ENCODE measurements at regions of chr10 and their contacts with region 1.

Region 1: DNA sequence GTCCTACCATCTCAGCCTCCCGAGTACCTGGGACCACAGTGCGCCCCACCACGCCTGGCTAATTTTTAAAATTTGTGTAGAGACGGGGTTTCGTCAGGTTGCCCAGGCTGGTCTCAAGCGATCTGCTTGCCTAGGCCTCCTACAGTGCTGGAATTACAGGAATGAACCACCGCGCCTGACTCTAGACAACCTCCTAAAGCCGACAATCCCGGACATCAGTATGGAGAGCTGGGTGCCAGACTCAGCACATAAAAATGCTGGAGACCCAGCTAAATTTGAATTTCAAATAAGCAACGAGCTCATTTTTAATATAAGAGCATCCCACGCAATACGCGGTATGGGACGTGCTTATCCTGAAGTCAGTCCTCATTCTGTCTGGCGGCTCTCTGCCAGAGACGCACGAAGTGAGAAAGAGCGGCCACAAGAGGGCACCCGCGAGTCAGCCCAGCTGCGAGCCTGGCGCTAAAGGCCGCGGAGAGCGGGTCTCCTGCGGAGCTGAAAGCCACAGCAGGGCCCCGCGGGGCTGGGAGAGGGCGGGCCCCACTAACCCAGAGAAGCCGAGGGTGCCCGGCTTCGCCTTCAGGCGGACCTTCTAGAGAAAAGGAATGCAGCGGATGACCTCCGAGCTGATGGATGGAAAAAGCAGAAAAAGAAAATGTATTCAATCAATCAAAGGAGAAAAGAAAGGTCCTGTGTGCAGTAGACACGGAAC is 7.0 kb downstream of the CALY start:
- DNase-seq: peak; percentile 84
- H3K4me3 Mint-ChIP-seq: peak overlapping the region; percentile 59
- H3K27ac Mint-ChIP-seq: no peak overlapping the region
- H3K4me1 Mint-ChIP-seq: peaks cover 5% of the 10 kb centered on the region
- H3K27me3 Mint-ChIP-seq: peaks cover 66% of the 10 kb centered on the region
- CTCF ChIP-seq: peak; percentile 89

Region 2: GRCh38 chr10:133124357-133125211 is 205.1 kb before region 1 on chr10:
- CTCF ChIA-PET with region 1: no interaction called
- POLR2A ChIA-PET with region 1: no interaction called
- intact Hi-C with region 1: no loop called
- DNase-seq: no peak
- H3K4me3 Mint-ChIP-seq: no peak overlapping the region
- H3K27ac Mint-ChIP-seq: no peak overlapping the region
- H3K4me1 Mint-ChIP-seq: no peaks in the 10 kb centered on the region
- H3K27me3 Mint-ChIP-seq: no peaks in the 10 kb centered on the region
- CTCF ChIP-seq: no peak

Region 3: GRCh38 chr10:133318494-133319127 is 11.0 kb before region 1 on chr10:
- CTCF ChIA-PET with region 1: interaction called, 29 read pairs
- POLR2A ChIA-PET with region 1: no interaction called
- intact Hi-C with region 1: no loop called
- DNase-seq: peak; percentile 66
- H3K4me3 Mint-ChIP-seq: peak overlapping the region; percentile 37
- H3K27ac Mint-ChIP-seq: no peak overlapping the region
- H3K4me1 Mint-ChIP-seq: peaks cover 12% of the 10 kb centered on the region
- H3K27me3 Mint-ChIP-seq: peaks cover 13% of the 10 kb centered on the region
- CTCF ChIP-seq: peak; percentile 75

Region 4: DNA sequence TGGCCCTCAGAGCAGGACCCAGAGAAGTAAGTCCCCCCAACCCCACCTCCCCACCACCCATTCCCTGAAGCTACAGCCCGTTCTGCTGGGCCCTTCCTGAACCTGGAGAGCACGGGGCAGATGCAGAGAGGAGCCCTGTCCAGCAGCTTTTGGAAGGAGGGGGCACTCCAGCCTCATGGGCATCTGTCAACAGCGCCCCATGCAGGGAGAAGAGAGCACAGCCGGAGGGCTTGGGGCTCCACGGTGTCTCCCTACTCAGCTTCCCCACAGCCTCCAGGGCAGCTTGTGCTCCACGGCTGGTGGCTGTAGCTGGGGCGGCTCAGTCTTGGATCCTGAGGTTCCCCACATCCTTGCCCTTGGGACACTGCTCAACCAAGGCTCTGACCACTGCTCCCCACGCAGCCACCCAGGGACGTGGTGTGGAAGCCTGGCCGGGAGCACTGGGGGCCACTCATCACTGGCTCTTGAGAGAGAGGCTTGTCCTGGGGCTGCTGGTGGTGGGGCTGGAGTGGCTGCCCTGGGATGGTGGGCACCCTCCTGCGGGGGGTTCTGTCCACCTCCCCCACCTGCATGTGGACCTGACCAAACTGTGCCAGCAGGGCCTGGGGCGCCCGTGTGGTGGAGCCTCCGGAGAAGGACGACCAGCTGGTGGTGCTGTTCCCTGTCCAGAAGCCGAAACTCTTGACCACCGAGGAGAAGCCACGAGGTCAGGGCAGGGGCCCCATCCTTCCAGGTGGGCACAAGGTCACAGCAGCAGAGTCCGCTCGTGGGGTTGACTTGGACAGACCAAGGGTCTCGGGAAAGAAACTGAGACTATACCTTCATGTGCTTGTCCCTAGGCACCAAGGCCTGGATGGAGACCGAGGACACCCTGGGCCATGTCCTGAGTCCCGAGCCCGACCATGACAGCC is 22.0 kb after region 1 on chr10:
- CTCF ChIA-PET with region 1: interaction called, 11 read pairs
- POLR2A ChIA-PET with region 1: no interaction called
- intact Hi-C with region 1: no loop called
- DNase-seq: no peak
- H3K4me3 Mint-ChIP-seq: no peak overlapping the region
- H3K27ac Mint-ChIP-seq: no peak overlapping the region
- H3K4me1 Mint-ChIP-seq: peaks cover 6% of the 10 kb centered on the region
- H3K27me3 Mint-ChIP-seq: no peaks in the 10 kb centered on the region
- CTCF ChIP-seq: no peak

Region 5: GRCh38 chr10:133394064-133394663 is 64.5 kb after region 1 on chr10 and contains the start of gene MTG1:
- CTCF ChIA-PET with region 1: interaction called, 6 read pairs
- POLR2A ChIA-PET with region 1: no interaction called
- intact Hi-C with region 1: loop called (anchors 10 kb)
- DNase-seq: peak; percentile 89
- H3K4me3 Mint-ChIP-seq: peak within 1 kb of the TSS; percentile 90
- H3K27ac Mint-ChIP-seq: peak within 1 kb of the TSS; percentile 95
- H3K4me1 Mint-ChIP-seq: no peaks in the 10 kb centered on the region
- H3K27me3 Mint-ChIP-seq: no peaks in the 10 kb centered on the region
- CTCF ChIP-seq: no peak
- total RNA-seq, gene MTG1: 71.6 and 74.3 TPM in 2 replicates

Region 6: DNA sequence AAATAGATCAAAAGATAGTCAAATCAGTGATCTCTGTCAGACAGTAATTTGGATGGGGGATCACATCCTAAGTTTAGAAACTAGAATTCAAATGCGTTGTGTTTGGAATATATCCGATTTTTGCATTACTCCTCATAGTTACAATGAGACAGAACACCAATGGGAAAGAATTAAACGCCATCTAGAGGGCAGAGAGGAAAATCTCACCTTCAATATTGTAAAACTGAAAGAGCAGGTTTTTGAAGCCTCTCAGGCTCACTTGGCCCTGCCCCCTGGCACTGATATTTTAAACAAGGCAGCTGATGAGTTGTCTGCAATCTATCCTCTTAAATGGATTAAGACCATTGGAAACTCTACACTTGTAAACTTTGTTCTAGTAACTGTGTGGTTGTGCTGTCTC is 279.2 kb after region 1 on chr10:
- CTCF ChIA-PET with region 1: interaction called, 12 read pairs
- POLR2A ChIA-PET with region 1: no interaction called
- intact Hi-C with region 1: loop called (anchors 2 kb)
- DNase-seq: peak; percentile 38
- H3K4me3 Mint-ChIP-seq: no peak overlapping the region
- H3K27ac Mint-ChIP-seq: no peak overlapping the region
- H3K4me1 Mint-ChIP-seq: peaks cover 4% of the 10 kb centered on the region
- H3K27me3 Mint-ChIP-seq: peaks cover 88% of the 10 kb centered on the region
- CTCF ChIP-seq: no peak

Measured in MCF 10A (cell line).